ENCODE measurements at regions of chr2 and their contacts with region 1.

Region 1: GRCh38 chr2:207769597-207770486 is at the start of gene FZD5:
- DNase-seq: peak; percentile 96 to 99 (median 97)
- ATAC-seq: peak; percentile 90 to 96 (median 95)
- H3K4me3 ChIP-seq: peak within 1 kb of the TSS; percentile 58 to 85 (median 76)
- H3K27ac ChIP-seq: peak within 1 kb of the TSS; percentile 22 to 92 (median 77)
- H3K4me1 ChIP-seq: peaks cover 5 to 51% (median 27%) of the 10 kb centered on the region in 12 donors
- H3K27me3 ChIP-seq: no peaks in the 10 kb centered on the region
- CTCF ChIP-seq: peak; percentile 29 to 78 (median 63)
- POLR2A ChIP-seq: peak; percentile 30 to 97
- total RNA-seq, gene FZD5: 3.3 to 8.7 (median 4.5) TPM

Region 2: GRCh38 chr2:207720517-207721208 is 49.2 kb before region 1 on chr2:
- intact Hi-C with region 1: no loop called
- DNase-seq: no peak
- ATAC-seq: no peak
- H3K4me3 ChIP-seq: no peak overlapping the region
- H3K27ac ChIP-seq: no peak overlapping the region
- H3K4me1 ChIP-seq: peaks cover 0 to 5% (median 0%) of the 10 kb centered on the region in 12 donors
- H3K27me3 ChIP-seq: no peaks in the 10 kb centered on the region
- CTCF ChIP-seq: no peak
- POLR2A ChIP-seq: no peak

Region 3: GRCh38 chr2:207813221-207813916 is 43.5 kb after region 1 on chr2:
- intact Hi-C with region 1: loop called in 1 of 10 experiments (anchors 5 kb)
- DNase-seq: no peak
- ATAC-seq: no peak
- H3K4me3 ChIP-seq: no peak overlapping the region
- H3K27ac ChIP-seq: no peak overlapping the region
- H3K4me1 ChIP-seq: peaks cover 0 to 19% (median 4%) of the 10 kb centered on the region in 12 donors
- H3K27me3 ChIP-seq: no peaks in the 10 kb centered on the region
- CTCF ChIP-seq: no peak
- POLR2A ChIP-seq: no peak

Region 4: DNA sequence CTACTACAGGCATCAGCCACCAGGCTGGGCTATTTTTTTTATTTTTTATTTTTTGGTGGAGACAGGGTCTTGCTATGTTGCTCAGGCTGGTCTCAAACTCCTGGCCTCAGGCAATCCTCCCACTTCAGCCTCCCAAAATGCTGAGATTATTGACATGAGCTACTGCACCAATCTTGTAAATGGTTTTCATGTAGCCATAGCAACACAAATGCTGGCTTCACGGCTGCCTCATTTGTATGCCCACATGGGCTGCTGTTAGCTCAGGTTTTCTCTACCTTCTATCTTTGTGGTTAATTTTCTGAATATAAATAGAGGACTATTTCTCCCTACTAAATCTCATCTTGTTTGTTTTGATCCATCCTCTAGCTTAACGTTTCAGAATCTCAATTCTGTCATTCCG is 197.3 kb after region 1 on chr2:
- intact Hi-C with region 1: loop called in 5 of 10 experiments (anchors 2 to 5 kb)
- DNase-seq: no peak
- ATAC-seq: no peak
- H3K4me3 ChIP-seq: no peak overlapping the region
- H3K27ac ChIP-seq: no peak overlapping the region
- H3K4me1 ChIP-seq: peaks cover 0 to 16% (median 6%) of the 10 kb centered on the region in 12 donors
- H3K27me3 ChIP-seq: no peaks in the 10 kb centered on the region
- CTCF ChIP-seq: no peak
- POLR2A ChIP-seq: no peak

Region 5: DNA sequence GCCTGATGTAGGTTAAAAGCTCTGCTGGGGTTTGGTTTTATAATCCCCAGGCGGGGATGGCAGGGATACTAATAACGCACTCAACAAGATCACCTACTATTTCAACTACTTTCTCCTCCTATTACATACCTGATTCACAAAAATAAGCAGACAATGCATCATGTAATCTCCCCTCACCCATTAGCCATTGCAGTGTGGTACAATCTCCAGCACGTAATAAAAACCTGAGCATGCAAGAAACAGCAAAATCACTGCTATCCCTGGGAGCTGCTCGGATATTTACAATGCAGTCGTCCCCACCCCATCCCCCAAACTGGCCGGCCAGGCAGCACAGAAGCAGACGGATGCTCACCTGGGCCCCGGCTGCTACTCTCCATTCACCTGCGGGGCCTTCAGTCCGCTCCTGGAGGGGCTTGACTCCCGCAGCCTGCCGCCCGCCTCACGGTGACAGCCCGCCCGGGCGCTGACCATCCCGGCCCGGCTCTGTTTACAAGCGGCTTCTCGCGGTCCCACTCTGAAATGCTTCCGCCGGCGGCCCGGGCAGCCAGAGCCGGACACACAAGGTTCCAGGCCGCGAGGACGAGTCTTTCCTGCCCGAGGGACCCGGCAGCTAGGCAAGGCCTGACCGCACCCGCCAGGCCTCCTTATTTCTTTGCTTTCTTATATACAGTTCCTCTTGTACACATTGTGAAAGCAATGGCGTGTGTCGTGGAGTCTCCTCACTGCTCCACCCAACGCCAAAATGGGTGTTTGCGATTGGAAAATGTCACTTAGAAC is 255.4 kb after region 1 on chr2 and contains the start of gene PLEKHM3:
- intact Hi-C with region 1: loop called in 4 of 10 experiments (anchors 2 to 5 kb)
- DNase-seq: peak; percentile 86 to 94 (median 88)
- ATAC-seq: peak; percentile 93 to 97 (median 97)
- H3K4me3 ChIP-seq: peak within 1 kb of the TSS; percentile 68 to 91 (median 81)
- H3K27ac ChIP-seq: peak within 1 kb of the TSS; percentile 55 to 89 (median 78)
- H3K4me1 ChIP-seq: peaks cover 0 to 29% (median 17%) of the 10 kb centered on the region in 12 donors
- H3K27me3 ChIP-seq: no peaks in the 10 kb centered on the region
- CTCF ChIP-seq: no peak
- POLR2A ChIP-seq: peak in 1 of 2 donors; percentile 63
- total RNA-seq, gene PLEKHM3: 10.3 to 28.3 (median 17.4) TPM

Region 6: GRCh38 chr2:208040199-208041171 is 270.6 kb after region 1 on chr2:
- intact Hi-C with region 1: loop called in 3 of 10 experiments (anchors 5 kb)
- DNase-seq: peak; percentile 46 to 74 (median 61)
- ATAC-seq: peak; percentile 59 to 71 (median 70)
- H3K4me3 ChIP-seq: no peak overlapping the region
- H3K27ac ChIP-seq: peak overlapping the region in 1 of 12 donors; percentile 24
- H3K4me1 ChIP-seq: no peaks in the 10 kb centered on the region
- H3K27me3 ChIP-seq: no peaks in the 10 kb centered on the region
- CTCF ChIP-seq: peak; percentile 52 to 75 (median 62)
- POLR2A ChIP-seq: no peak